ENCODE measurements at regions of chr13 and their contacts with region 1.

Region 1: GRCh38 chr13:30395192-30396084 is 26.9 kb upstream of the UBE2L5 start:
- DNase-seq: peak; percentile 77 to 89 (median 88)
- H3K4me3 ChIP-seq: peak overlapping the region; percentile 50 to 93 (median 73)
- H3K27ac ChIP-seq: peak overlapping the region; percentile 69 to 88
- H3K4me1 ChIP-seq: peaks cover 0 to 14% (median 8%) of the 10 kb centered on the region in 4 experiments
- H3K27me3 ChIP-seq: no peaks in the 10 kb centered on the region

Region 2: GRCh38 chr13:30408319-30409101 is 13.1 kb after region 1 on chr13:
- CTCF ChIA-PET with region 1: interaction called, 12 read pairs
- POLR2A ChIA-PET with region 1: interaction called, 5 read pairs
- DNase-seq: peak; percentile 93 to 97 (median 97)
- H3K4me3 ChIP-seq: peak overlapping the region in 6 of 7 experiments; percentile 6 to 52 (median 46)
- H3K27ac ChIP-seq: no peak overlapping the region
- H3K4me1 ChIP-seq: peaks cover 2 to 15% (median 8%) of the 10 kb centered on the region in 4 experiments
- H3K27me3 ChIP-seq: no peaks in the 10 kb centered on the region

Region 3: GRCh38 chr13:30422054-30422839 is 26.8 kb after region 1 on chr13 and contains the start of gene UBE2L5:
- CTCF ChIA-PET with region 1: no interaction called
- POLR2A ChIA-PET with region 1: no interaction called
- DNase-seq: peak; percentile 66 to 88 (median 85)
- H3K4me3 ChIP-seq: peak within 1 kb of the TSS; percentile 50 to 90 (median 75)
- H3K27ac ChIP-seq: peak within 1 kb of the TSS in 1 of 2 experiments; percentile 75
- H3K4me1 ChIP-seq: peaks cover 3 to 18% (median 14%) of the 10 kb centered on the region in 4 experiments
- H3K27me3 ChIP-seq: no peaks in the 10 kb centered on the region